Kidney (tissue), 22 donors: ENCODE measurements at regions of chr5 and their contacts with region 1.

Region 1: DNA sequence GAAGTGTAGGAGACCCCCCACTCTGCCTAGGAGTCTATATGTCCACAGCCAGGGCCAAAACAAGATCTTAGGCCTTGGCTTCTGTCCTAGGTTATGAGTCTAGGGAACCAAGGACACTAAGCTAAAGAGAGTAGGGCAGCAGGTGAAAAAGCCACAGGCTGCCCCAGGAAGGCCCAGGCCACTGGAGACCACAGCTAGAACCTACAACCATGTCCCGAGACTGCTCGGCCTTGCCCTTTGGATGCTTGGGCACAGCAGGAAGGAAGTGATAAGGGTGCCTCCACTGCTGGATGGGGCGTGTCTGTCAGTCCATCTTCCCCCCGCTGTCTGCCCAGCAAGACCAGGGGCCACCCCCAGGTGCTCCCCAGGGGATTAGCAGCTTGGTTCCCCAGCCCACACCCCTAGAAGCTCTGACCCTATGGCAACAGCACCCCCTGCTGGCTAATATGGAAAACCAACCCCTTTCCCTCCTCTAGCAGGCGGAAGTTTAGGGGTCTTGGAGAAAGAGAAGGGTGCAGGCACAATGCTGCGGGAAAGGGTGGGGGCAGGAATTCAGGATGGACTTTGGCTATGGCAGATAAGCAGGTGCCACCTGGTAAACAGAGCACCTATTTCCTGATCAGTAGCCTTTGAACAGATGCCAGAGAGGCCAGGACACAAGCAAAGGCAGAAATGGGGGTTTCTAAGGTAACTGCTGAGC is 10.5 kb upstream of the IRF1 start:
- DNase-seq: peak; percentile 56 to 85 (median 81)
- H3K4me3 ChIP-seq: no peak overlapping the region
- H3K27ac ChIP-seq: peak overlapping the region; percentile 47 to 60
- H3K4me1 ChIP-seq: peaks cover 4 to 20% (median 10%) of the 10 kb centered on the region in 3 donors
- H3K27me3 ChIP-seq: no peaks in the 10 kb centered on the region
- CTCF ChIP-seq: peak; percentile 90

Region 2: DNA sequence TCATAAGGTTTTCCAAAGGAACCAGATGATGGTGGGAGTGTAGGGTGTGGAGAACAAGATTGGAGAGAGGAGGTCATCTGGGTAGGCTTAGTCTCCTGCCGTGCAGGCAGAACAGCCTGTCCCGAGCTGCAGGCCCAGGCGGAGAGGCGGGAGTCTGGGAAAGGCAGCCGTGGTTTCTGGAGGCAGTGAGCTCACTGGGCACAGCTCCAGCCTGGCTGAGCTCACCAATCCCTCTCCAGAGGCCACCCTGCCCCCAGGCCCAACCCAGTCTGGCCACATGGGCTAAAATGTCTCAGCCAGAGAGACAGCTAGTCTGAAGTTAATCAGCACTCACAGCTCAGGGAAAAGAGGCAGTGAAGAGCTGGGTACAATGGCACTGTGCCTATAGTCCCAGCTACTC is 285.8 kb before region 1 on chr5:
- intact Hi-C with region 1: no loop called
- DNase-seq: peak in 2 of 5 donors; percentile 20 to 97
- H3K4me3 ChIP-seq: no peak overlapping the region
- H3K27ac ChIP-seq: peak overlapping the region in 1 of 2 donors; percentile 66
- H3K4me1 ChIP-seq: peaks cover 0 to 6% (median 5%) of the 10 kb centered on the region in 3 donors
- H3K27me3 ChIP-seq: no peaks in the 10 kb centered on the region
- CTCF ChIP-seq: no peak

Region 3: GRCh38 chr5:132386644-132387286 is 114.3 kb before region 1 on chr5:
- intact Hi-C with region 1: loop called (anchors 10 kb)
- DNase-seq: peak; percentile 77 to 88 (median 85)
- H3K4me3 ChIP-seq: no peak overlapping the region
- H3K27ac ChIP-seq: peak overlapping the region; percentile 96 to 98
- H3K4me1 ChIP-seq: peaks cover 19 to 42% (median 37%) of the 10 kb centered on the region in 3 donors
- H3K27me3 ChIP-seq: no peaks in the 10 kb centered on the region
- CTCF ChIP-seq: peak; percentile 85